ENCODE measurements at regions of chr1 and their contacts with region 1.

Region 1: DNA sequence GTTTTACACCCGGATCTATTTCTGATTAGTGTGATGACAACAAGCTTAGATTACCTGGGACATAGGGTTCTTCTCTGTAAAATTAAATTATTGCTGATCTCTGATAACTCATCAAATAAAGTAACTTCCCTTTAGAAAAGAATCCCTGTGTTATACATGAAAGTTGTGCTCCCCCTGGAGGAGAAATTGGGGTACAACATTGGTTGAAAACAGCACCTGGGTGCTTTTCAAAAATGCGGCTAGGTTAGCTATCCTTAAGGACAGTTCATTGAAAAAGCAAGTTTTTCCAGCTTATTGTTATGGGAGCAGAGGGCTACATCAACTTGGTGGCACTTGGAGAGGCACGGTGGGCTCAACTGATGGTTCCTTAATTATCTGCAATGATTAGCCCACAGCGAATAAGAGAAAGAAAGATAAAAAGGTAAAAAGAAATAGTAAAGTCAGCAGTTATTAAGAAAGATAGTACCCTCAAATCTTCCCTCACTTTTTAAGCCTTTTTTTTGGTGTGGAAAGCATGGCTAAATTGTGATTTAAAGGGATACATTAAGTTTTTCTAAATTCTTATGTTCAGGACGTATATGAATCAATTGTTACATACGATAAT is 97.8 kb downstream of the FMN2 start:
- DNase-seq: peak; percentile 88
- H3K4me3 Mint-ChIP-seq: no peak overlapping the region
- H3K27ac Mint-ChIP-seq: no peak overlapping the region
- H3K4me1 Mint-ChIP-seq: peaks cover 14% of the 10 kb centered on the region
- H3K27me3 Mint-ChIP-seq: peaks cover 34% of the 10 kb centered on the region
- CTCF ChIP-seq: peak; percentile 90

Region 2: GRCh38 chr1:239951511-239952140 is 237.9 kb before region 1 on chr1:
- CTCF ChIA-PET with region 1: interaction called, 19 read pairs
- POLR2A ChIA-PET with region 1: no interaction called
- intact Hi-C with region 1: loop called (anchors 1 kb)
- DNase-seq: peak; percentile 92
- H3K4me3 Mint-ChIP-seq: no peak overlapping the region
- H3K27ac Mint-ChIP-seq: no peak overlapping the region
- H3K4me1 Mint-ChIP-seq: no peaks in the 10 kb centered on the region
- H3K27me3 Mint-ChIP-seq: no peaks in the 10 kb centered on the region
- CTCF ChIP-seq: peak; percentile 95

Region 3: GRCh38 chr1:240149484-240150094 is 39.9 kb before region 1 on chr1:
- CTCF ChIA-PET with region 1: interaction called, 37 read pairs
- POLR2A ChIA-PET with region 1: no interaction called
- intact Hi-C with region 1: no loop called
- DNase-seq: peak; percentile 75
- H3K4me3 Mint-ChIP-seq: no peak overlapping the region
- H3K27ac Mint-ChIP-seq: no peak overlapping the region
- H3K4me1 Mint-ChIP-seq: no peaks in the 10 kb centered on the region
- H3K27me3 Mint-ChIP-seq: peaks cover 13% of the 10 kb centered on the region
- CTCF ChIP-seq: peak; percentile 86

Region 4: DNA sequence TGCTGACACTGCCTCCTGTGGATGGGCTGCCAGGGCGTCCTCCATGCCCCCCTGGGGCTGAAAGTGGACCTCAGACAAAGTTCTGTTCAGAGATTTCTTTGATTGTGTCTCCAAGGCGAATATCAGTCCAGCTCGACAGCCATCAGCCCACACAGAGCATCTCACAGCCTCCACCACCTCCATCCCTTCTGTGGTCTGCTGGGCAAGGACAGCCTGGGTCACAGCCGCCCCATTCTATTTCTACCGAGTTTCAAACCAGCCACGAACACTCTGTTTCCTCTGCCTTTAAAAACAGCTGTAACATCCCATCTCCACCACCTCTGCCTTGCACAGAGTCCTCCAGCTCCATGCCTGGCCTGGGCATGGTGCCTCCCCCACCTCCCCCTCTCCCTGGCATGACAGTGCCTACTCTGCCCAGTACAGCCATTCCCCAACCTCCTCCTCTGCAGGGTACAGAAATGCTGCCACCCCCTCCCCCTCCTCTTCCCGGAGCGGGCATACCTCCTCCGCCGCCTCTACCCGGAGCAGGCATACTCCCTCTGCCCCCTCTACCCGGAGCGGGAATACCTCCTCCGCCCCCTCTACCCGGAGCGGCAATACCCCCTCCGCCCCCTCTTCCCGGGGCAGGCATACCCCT is 17.7 kb after region 1 on chr1:
- CTCF ChIA-PET with region 1: interaction called, 91 read pairs
- POLR2A ChIA-PET with region 1: no interaction called
- intact Hi-C with region 1: no loop called
- DNase-seq: no peak
- H3K4me3 Mint-ChIP-seq: no peak overlapping the region
- H3K27ac Mint-ChIP-seq: no peak overlapping the region
- H3K4me1 Mint-ChIP-seq: peaks cover 5% of the 10 kb centered on the region
- H3K27me3 Mint-ChIP-seq: no peaks in the 10 kb centered on the region
- CTCF ChIP-seq: no peak

Region 5: DNA sequence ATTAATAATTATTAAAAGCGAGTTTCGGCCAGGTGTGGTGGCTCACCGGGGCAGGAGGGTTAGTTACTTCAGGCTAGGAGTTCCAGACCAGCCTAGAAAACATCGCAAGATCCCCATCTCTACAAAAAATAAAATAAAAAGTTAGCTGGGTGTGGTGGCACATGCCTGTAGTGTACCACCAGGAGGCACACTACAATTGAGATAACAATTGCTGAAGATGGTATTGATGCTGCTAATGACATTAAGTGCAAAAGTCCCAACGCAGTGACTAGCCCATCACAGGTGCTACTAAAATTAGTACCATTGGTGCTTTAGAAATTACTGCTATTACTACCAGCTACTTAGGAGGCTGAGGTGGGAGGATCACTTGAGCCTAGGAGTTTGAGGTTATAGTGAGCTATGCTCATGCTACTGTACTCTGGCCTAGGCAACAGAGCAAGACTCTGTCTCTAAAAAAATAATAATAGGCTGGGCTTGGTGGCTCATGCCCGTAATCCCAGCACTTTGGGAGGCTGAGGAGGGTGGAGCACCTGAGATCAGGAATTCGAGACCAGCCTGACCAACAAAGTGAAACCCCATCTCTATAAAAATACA is 265.8 kb after region 1 on chr1:
- CTCF ChIA-PET with region 1: interaction called, 6 read pairs
- POLR2A ChIA-PET with region 1: no interaction called
- intact Hi-C with region 1: loop called (anchors 1 kb)
- DNase-seq: peak; percentile 65
- H3K4me3 Mint-ChIP-seq: no peak overlapping the region
- H3K27ac Mint-ChIP-seq: no peak overlapping the region
- H3K4me1 Mint-ChIP-seq: no peaks in the 10 kb centered on the region
- H3K27me3 Mint-ChIP-seq: no peaks in the 10 kb centered on the region
- CTCF ChIP-seq: peak; percentile 38

Region 6: DNA sequence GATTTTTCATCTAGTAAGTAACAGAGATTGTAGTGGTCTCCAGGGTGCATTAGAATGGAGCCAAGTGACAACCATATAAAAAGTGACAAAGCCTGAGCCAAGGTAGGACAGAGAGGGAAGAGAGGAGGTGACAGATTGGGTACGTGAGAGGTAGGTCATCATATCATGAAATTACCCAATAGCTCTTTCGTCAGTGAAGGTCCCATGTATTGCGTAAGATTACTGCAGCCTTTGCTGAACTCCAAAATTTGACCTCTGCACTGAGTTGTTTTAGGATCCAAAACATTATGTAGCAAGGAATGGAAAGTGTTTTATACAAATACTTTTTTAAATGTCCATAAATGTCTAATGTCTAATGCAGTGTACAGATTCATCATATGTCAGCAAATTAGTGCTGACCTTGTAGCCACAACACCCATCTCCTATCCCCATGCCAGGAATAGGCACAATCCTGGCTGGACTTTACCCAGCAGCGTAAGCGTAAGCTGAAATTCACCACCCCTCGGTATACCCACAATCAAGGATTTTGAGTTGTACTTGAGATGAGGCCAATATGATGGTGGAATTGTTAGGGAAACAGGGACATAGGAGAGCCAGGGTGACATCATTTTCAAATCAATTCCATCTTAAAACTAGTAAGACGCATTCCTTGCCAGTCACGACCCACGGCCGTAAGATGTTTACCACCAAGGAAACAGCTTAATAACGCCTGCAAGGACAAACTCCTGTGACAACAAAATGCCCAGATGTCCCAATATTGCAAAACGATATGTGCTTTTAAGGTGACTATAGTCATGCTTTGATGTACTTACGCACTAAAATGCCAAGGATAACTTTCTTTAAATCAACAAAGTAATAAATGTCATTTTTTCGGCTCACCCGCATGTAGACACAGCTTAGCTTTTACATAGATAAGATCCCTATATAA is 460.5 kb after region 1 on chr1:
- CTCF ChIA-PET with region 1: interaction called, 13 read pairs
- POLR2A ChIA-PET with region 1: no interaction called
- intact Hi-C with region 1: no loop called
- DNase-seq: peak; percentile 40
- H3K4me3 Mint-ChIP-seq: no peak overlapping the region
- H3K27ac Mint-ChIP-seq: no peak overlapping the region
- H3K4me1 Mint-ChIP-seq: peaks cover 4% of the 10 kb centered on the region
- H3K27me3 Mint-ChIP-seq: no peaks in the 10 kb centered on the region
- CTCF ChIP-seq: no peak